ENCODE measurements at regions of chr6 and their contacts with region 1.

Region 1: DNA sequence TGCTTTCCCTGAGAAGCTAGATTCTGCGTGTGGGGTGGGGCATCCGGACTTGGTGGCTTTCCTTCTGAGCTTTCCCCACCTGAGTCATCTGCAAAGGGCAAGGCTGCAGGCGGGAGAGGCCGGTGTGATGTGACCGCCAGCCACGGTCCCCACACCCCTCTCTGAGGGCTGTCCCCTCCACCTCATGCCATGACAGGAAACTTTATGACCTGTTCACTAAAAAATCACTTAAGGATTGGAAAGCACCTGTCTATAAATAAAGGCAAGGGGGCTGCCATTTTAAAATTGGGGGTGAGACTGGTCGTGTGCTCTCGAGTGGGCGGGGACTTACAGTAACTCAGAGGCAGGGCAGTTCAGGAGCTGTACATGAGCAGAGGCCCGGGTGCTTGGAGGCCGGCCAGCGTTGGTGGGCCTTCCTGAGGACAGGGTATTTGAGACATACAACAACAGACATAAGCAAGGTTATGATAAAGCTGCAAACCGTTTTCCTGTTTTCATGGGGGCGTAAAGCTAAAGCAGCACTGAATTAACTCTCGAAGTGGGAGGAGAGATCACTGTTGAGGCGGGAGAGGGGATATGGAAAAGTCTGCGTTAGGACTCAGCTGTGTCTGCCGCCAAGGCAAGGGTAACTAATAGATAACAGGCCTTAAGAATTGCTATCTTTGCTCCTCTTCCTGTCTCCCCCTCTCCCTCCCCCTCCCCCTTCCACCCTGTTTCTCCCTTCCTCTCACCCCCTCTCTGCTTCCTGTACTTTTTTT is 16.1 kb upstream of the SERPINB1 start:
- DNase-seq: no peak

Region 2: GRCh38 chr6:2791124-2791974 is 66.4 kb before region 1 on chr6:
- intact Hi-C with region 1: loop called (anchors 5 kb)
- DNase-seq: peak in 5 of 10 donors; percentile 62 to 93 (median 64)